ENCODE measurements at regions of chr6 and their contacts with region 1.

Region 1: GRCh38 chr6:109482905-109483735 is at the start of gene ZBTB24:
- DNase-seq: peak; percentile 94
- H3K4me3 ChIP-seq: peak within 1 kb of the TSS; percentile 71 to 99 (median 90)
- H3K27ac ChIP-seq: peak within 1 kb of the TSS; percentile 88 to 95 (median 92)
- H3K4me1 ChIP-seq: peaks cover 21 to 54% (median 33%) of the 10 kb centered on the region in 4 donors
- H3K27me3 ChIP-seq: no peaks in the 10 kb centered on the region
- CTCF ChIP-seq: peak in 1 of 5 experiments; percentile 7
- EP300 ChIP-seq: no peak
- POLR2A ChIP-seq: peak; percentile 55
- total RNA-seq, gene ZBTB24: 3.0 to 7.8 (median 5.7) TPM

Region 2: GRCh38 chr6:109269953-109270517 is 213.1 kb before region 1 on chr6:
- in situ Hi-C with region 1: no loop called
- intact Hi-C with region 1: no loop called
- DNase-seq: no peak
- H3K4me3 ChIP-seq: no peak overlapping the region
- H3K27ac ChIP-seq: no peak overlapping the region
- H3K4me1 ChIP-seq: no peaks in the 10 kb centered on the region
- H3K27me3 ChIP-seq: no peaks in the 10 kb centered on the region
- CTCF ChIP-seq: no peak
- EP300 ChIP-seq: no peak
- POLR2A ChIP-seq: no peak

Region 3: DNA sequence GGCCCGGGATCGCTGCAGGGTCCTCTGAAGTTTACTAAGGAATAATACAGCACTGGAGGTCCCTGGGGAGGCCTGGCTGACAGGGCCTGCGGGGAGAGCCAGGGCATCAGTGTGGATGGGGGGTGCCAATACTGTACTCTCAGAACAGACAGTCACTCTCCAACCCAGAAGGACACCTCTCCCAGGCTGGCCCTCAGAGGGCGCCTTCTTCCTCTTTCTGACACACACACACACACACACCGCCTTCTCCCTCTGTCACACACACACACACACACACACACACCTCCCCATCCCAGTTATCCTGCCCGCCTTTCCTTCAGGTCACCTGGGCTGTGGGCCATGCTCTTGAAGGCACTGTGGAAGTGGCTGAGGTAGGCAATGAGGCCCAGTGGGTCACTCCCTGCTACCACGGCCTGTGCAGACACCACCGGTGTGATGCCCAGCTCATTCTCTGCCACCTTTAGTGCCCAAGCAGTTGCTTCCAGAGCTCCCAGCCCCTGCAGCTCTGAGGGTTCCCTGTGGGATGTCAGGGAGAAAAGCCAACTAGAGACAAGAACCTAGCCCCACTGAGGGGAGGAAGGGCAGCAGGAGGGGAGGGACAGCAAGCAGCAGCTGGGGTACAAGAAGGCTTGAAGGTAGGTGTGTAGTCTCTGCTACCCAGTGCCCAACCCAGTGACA is 35.1 kb before region 1 on chr6:
- in situ Hi-C with region 1: no loop called
- intact Hi-C with region 1: loop called (anchors 1 kb)
- DNase-seq: no peak
- H3K4me3 ChIP-seq: no peak overlapping the region
- H3K27ac ChIP-seq: no peak overlapping the region
- H3K4me1 ChIP-seq: peaks cover 0 to 7% (median 0%) of the 10 kb centered on the region in 4 donors
- H3K27me3 ChIP-seq: no peaks in the 10 kb centered on the region
- CTCF ChIP-seq: no peak
- EP300 ChIP-seq: no peak
- POLR2A ChIP-seq: no peak

Region 4: GRCh38 chr6:111011360-111012142 is 1528.4 kb after region 1 on chr6:
- in situ Hi-C with region 1: no loop called
- intact Hi-C with region 1: loop called (anchors 5 kb)
- DNase-seq: no peak
- H3K4me3 ChIP-seq: no peak overlapping the region
- H3K27ac ChIP-seq: no peak overlapping the region
- H3K4me1 ChIP-seq: no peaks in the 10 kb centered on the region
- H3K27me3 ChIP-seq: no peaks in the 10 kb centered on the region
- CTCF ChIP-seq: peak; percentile 44 to 55 (median 47)
- EP300 ChIP-seq: no peak
- POLR2A ChIP-seq: no peak

Region 5: GRCh38 chr6:111456208-111456607 is 1973.1 kb after region 1 on chr6:
- in situ Hi-C with region 1: no loop called
- intact Hi-C with region 1: no loop called
- DNase-seq: no peak
- H3K4me3 ChIP-seq: no peak overlapping the region
- H3K27ac ChIP-seq: no peak overlapping the region
- H3K4me1 ChIP-seq: peaks cover 0 to 21% (median 1%) of the 10 kb centered on the region in 4 donors
- H3K27me3 ChIP-seq: no peaks in the 10 kb centered on the region
- CTCF ChIP-seq: no peak
- EP300 ChIP-seq: no peak
- POLR2A ChIP-seq: no peak

Measured in transverse colon (tissue), 4 donors.